Astrocyte of the cerebellum (primary cell): ENCODE measurements at regions of chr1 and their contacts with region 1.

Region 1: GRCh38 chr1:164949771-164950471 is 390.9 kb downstream of the PBX1 start:
- DNase-seq: no peak
- H3K4me3 ChIP-seq: no peak overlapping the region
- CTCF ChIP-seq: no peak

Region 2: DNA sequence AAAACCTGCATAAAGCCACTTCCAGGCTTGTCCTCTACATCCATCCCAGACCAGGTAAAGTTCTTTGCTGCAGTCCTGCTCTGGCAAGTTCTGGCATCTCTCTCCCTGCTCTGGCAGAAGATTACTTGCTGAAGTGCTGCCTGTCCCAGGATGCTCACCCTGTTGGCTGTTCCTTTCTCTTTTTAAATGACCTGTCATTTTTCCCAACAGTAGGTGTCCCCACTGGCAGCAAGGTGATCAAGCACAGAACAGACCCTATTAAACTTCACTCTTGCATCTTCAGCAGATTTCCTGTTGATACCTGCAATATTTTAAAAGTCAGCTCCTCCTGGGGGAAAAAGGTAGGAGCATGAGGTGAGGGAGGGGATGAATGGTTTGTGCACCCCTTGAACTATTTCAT is 58.3 kb before region 1 on chr1:
- in situ Hi-C with region 1: no loop called
- DNase-seq: no peak
- H3K4me3 ChIP-seq: no peak overlapping the region
- CTCF ChIP-seq: no peak

Region 3: DNA sequence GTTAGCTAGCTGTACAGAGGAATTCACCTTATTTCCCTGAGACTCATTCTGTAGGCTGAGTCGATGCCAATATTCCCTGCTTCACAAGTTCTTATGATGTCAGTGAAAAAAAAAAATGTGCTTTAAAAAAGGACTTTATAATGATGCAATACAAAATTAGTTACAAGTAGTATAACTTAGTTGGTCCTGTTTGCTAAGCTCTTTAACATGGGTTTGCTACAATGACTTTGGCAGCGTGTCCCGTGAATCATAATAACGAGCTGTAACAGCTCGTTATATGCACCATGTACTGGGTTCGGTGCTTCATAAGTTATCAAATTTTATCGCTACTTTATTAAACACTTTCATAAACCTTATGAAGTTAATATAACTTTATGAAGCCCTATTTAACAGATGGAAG is 56.9 kb after region 1 on chr1:
- in situ Hi-C with region 1: loop called (anchors 5 kb)
- DNase-seq: no peak
- H3K4me3 ChIP-seq: no peak overlapping the region
- CTCF ChIP-seq: no peak